ENCODE measurements at regions of chr12 and their contacts with region 1.

Region 1: DNA sequence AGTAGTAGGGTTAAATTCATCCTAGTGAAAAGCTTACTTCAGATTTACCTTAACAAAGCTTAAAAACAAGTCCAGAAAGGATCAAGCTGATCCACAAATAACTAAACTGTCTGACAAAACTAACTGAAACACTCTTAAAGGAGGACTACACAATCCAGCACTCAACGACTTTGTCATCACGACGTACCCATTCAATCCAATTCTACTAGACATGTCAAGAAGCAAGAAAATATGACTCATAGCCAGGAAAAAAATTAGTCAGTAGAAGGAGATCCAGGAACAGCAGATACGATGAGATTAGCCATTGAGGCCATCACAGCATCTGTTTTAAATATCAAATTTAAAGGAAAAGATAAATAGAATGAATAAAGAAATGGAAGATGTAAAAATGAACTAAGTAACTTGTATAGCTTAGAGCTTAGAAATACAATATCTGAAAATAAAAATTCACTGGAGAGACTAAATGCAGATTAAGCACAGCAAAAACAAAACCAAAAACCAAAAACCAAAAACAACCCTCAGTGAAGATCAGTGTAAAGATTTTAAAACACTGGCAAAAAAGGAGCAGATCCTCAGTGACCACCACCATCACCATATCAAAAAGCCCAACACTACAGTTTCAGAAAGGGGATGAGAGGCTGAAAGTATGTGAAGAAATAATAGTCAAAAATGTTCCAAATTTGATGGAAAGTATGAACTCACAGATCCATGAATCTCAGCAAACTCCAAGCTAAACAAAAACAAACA is 95.0 kb upstream of the CCND2 start:
- DNase-seq: no peak
- H3K4me3 Mint-ChIP-seq: peak overlapping the region; percentile 41
- H3K27ac Mint-ChIP-seq: peak overlapping the region; percentile 75
- H3K4me1 Mint-ChIP-seq: peaks cover 21% of the 10 kb centered on the region
- H3K27me3 Mint-ChIP-seq: peaks cover 2% of the 10 kb centered on the region

Region 2: GRCh38 chr12:3622021-3622821 is 556.4 kb before region 1 on chr12:
- intact Hi-C with region 1: no loop called
- DNase-seq: no peak
- H3K4me3 Mint-ChIP-seq: no peak overlapping the region
- H3K27ac Mint-ChIP-seq: peak overlapping the region; percentile 41
- H3K4me1 Mint-ChIP-seq: peaks cover 16% of the 10 kb centered on the region
- H3K27me3 Mint-ChIP-seq: no peaks in the 10 kb centered on the region

Region 3: GRCh38 chr12:4030929-4031702 is 147.5 kb before region 1 on chr12:
- intact Hi-C with region 1: no loop called
- DNase-seq: peak; percentile 69
- H3K4me3 Mint-ChIP-seq: peak overlapping the region; percentile 62
- H3K27ac Mint-ChIP-seq: no peak overlapping the region
- H3K4me1 Mint-ChIP-seq: peaks cover 22% of the 10 kb centered on the region
- H3K27me3 Mint-ChIP-seq: peaks cover 17% of the 10 kb centered on the region

Region 4: GRCh38 chr12:4112734-4113325 is 65.8 kb before region 1 on chr12:
- intact Hi-C with region 1: loop called (anchors 1 kb)
- DNase-seq: no peak
- H3K4me3 Mint-ChIP-seq: no peak overlapping the region
- H3K27ac Mint-ChIP-seq: peak overlapping the region; percentile 50
- H3K4me1 Mint-ChIP-seq: peaks cover 83% of the 10 kb centered on the region
- H3K27me3 Mint-ChIP-seq: no peaks in the 10 kb centered on the region

Region 5: GRCh38 chr12:4135919-4136605 is 42.5 kb before region 1 on chr12:
- intact Hi-C with region 1: loop called (anchors 1 kb)
- DNase-seq: no peak
- H3K4me3 Mint-ChIP-seq: peak overlapping the region; percentile 27
- H3K27ac Mint-ChIP-seq: peak overlapping the region; percentile 79
- H3K4me1 Mint-ChIP-seq: peaks cover 58% of the 10 kb centered on the region
- H3K27me3 Mint-ChIP-seq: no peaks in the 10 kb centered on the region

Region 6: DNA sequence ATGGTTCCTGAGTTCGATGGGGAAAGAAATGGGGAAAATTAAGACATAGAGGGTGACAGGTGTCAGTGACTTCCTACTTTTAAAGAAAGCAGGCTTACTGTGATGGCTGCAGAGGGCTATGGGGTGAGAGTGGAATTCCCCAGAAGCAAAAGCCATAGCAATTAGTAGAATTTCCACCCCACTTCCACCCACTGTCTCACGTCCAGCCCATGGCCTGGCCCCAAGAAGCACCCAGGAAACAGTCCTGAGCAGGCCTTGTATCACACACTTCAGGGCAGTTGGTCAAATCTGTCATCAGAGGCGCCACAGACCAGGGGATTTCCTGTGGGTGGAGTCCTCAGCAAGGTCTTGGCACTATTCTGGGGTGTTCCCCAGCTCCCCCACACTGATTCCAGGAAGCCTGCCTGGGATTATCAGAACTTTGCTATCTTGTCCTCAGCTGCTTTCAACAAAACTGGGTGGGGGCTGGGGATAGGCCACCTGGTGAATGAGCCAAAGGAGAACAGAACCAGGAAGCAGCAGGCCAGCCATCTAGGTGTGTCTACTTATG is 25.2 kb before region 1 on chr12:
- intact Hi-C with region 1: loop called (anchors 1 kb)
- DNase-seq: peak; percentile 78
- H3K4me3 Mint-ChIP-seq: peak overlapping the region; percentile 63
- H3K27ac Mint-ChIP-seq: peak overlapping the region; percentile 94
- H3K4me1 Mint-ChIP-seq: peaks cover 88% of the 10 kb centered on the region
- H3K27me3 Mint-ChIP-seq: no peaks in the 10 kb centered on the region

Region 7: GRCh38 chr12:4215229-4216186 is 36.9 kb after region 1 on chr12:
- intact Hi-C with region 1: loop called (anchors 1 kb)
- DNase-seq: peak; percentile 24
- H3K4me3 Mint-ChIP-seq: peak overlapping the region; percentile 65
- H3K27ac Mint-ChIP-seq: peak overlapping the region; percentile 83
- H3K4me1 Mint-ChIP-seq: peaks cover 49% of the 10 kb centered on the region
- H3K27me3 Mint-ChIP-seq: peaks cover 2% of the 10 kb centered on the region

Region 8: GRCh38 chr12:4690760-4691159 is 512.2 kb after region 1 on chr12:
- intact Hi-C with region 1: no loop called
- DNase-seq: no peak
- H3K4me3 Mint-ChIP-seq: no peak overlapping the region
- H3K27ac Mint-ChIP-seq: no peak overlapping the region
- H3K4me1 Mint-ChIP-seq: no peaks in the 10 kb centered on the region
- H3K27me3 Mint-ChIP-seq: no peaks in the 10 kb centered on the region

Measured in activated T-helper 1 cell treated with anti-CD3 and anti-CD28 coated beads, Interleukin-12 subunit alpha, Interleukin-12 subunit beta, Interleukin-2, Interleukin-4 antibody, amounts not matched to agents 30 ng/mL and 10 ng/mL and 1 ng/mL, durations not matched to agents 14 hours and 24 hours and 36 hours (primary cell).